OCI-LY7 (cell line): ENCODE measurements at regions of chr6 and their contacts with region 1.

Region 1: DNA sequence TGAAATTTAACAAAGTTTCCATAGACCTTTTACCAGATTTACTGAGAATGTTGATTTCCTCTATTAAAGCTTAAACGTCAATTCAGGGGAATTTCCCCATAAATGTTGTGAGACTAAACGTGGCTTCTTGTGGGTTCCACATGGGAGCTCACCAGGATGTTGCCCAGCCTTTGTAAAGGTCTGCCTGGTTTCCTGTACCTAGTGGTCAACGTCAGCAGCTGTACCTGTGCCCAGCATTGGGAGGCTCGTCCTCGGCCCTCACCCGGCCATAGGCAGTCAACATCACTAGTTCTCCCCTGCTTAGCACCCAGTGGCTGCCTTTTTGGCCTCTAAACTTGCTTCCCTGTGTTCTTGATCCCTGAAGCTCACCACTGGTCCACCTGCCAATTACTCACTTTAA is 22.1 kb upstream of the CD83 start:
- DNase-seq: peak; percentile 75
- H3K4me3 ChIP-seq: peak overlapping the region; percentile 28
- H3K27ac ChIP-seq: peak overlapping the region; percentile 44
- H3K4me1 ChIP-seq: peaks cover 63% of the 10 kb centered on the region
- CTCF ChIP-seq: no peak

Region 2: DNA sequence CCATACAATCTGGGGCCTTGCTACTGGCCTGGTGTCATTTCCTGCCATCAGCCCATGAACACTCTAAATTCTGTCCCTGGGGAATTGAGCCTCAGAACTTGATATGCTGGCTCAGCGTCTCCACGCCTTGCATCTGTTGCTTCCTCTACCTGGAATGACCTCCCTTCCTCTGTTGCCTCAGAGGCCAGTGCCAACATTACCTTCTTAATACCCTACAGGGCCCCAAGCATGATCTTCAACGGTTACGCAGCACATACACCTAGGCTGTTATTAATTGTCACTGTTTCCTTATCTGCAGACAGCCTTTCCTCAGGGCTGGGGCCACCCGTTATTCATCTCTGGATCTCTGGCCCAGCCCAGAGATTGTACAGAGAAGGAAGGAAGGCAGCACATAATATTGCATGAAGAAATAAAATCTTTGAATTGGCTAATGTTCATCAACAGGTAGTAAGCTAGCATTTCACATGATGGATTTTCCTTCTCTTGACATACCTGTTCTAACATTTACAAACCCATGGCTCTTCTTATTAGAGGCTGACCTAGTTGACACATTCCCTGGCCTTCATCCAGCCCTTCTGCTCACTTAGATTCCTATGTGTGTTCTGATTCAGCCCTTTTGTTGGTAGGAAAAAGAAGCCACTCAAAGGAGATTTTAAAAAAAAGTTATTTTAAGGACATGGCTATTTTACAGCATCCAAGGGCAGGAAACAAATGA is 179.1 kb before region 1 on chr6:
- CTCF ChIA-PET with region 1: no interaction called
- POLR2A ChIA-PET with region 1: no interaction called
- intact Hi-C with region 1: no loop called
- DNase-seq: peak; percentile 26
- H3K4me3 ChIP-seq: no peak overlapping the region
- H3K27ac ChIP-seq: no peak overlapping the region
- H3K4me1 ChIP-seq: no peaks in the 10 kb centered on the region
- CTCF ChIP-seq: no peak

Region 3: DNA sequence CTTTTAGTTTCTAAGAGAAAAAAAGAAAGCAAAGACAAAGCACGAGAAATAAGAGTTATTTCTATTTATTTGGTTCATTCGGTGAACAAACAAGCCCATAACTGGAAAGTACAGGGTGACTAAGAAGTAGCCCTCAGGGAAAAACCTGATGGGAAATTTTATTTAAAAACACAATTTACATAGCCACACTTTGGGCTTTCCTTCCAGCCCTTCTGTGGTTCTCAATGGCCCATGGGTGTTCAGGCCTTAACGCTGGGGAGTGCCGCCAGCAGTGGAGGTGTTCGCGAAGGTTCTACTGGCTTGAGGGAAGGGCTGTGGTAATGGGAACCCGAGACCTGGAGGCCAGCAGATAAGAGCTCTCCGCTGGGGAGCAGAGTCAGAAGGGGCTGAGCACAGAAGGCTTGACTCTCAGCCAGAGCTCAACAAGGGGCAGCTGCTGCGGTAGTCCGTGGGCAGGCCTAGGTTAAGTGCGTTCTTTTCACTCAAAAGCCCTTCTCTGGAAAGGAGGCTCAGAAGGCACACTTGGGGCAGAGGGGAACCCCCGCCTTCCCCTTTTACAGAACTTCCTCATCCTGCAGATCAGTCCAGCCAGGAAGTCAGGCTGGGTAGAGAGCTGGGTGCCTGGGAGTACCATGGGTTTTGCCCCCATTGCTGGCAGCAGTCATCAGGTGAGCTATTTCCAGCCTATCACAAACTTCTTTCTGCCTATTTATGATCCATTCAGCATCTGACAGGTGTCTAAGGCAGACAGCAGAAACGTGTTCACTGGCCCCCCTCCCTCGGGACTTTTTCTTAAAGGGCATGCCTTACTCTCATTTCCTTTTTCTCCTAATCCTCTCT is 13.4 kb after region 1 on chr6:
- CTCF ChIA-PET with region 1: interaction called, 3 read pairs
- POLR2A ChIA-PET with region 1: interaction called, 21 read pairs
- intact Hi-C with region 1: no loop called
- DNase-seq: peak; percentile 75
- H3K4me3 ChIP-seq: peak overlapping the region; percentile 39
- H3K27ac ChIP-seq: peak overlapping the region; percentile 43
- H3K4me1 ChIP-seq: peaks cover 31% of the 10 kb centered on the region
- CTCF ChIP-seq: no peak

Region 4: DNA sequence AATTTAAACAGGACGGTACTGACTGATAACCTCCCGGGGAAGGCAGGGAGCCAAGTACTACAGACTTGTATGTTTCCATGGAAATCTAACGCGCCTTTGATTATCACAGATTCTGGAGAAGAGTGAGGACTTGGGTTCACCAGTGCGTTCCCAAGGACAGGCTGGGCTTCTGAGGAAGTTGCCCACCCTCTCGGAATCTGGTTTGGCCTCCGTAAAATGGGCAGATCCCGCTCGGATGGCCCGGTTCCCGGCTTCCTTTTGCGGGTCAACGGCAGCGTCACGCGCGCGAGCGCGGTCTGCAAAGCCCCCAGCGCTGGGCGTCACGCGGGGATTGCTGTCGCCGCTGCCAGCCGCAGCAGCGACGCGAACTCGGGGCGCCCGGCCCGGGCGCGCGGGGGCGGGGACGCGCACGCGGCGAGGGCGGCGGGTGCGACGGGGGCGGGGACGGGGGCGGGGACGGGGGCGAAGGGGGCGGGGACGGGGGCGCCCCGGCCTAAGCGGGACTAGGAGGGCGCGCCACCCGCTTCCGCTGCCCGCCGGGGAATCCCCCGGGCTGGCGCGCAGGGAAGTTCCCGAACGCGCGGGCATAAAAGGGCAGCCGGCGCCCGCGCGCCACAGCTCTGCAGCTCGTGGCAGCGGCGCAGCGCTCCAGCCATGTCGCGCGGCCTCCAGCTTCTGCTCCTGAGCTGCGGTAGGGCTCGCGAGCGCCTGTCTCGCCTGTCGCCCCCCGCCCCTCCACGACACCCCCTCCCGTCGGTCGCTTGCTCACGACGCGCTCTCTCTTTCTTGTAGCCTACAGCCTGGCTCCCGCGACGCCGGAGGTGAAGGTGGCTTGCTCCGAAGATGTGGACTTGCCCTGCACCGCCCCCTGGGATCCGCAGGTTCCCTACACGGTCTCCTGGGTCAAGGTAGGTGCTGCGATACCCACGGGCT is 22.0 kb after region 1 on chr6 and contains the start of gene CD83:
- CTCF ChIA-PET with region 1: no interaction called
- POLR2A ChIA-PET with region 1: interaction called, 12 read pairs
- intact Hi-C with region 1: no loop called
- DNase-seq: peak; percentile 89
- H3K4me3 ChIP-seq: peak within 1 kb of the TSS; percentile 95
- H3K27ac ChIP-seq: peak within 1 kb of the TSS; percentile 20
- H3K4me1 ChIP-seq: peaks cover 48% of the 10 kb centered on the region
- CTCF ChIP-seq: peak; percentile 46; the same call in 1 of the 2 replicates
- total RNA-seq, gene CD83: 26.2 and 29.7 TPM in 2 replicates

Region 5: DNA sequence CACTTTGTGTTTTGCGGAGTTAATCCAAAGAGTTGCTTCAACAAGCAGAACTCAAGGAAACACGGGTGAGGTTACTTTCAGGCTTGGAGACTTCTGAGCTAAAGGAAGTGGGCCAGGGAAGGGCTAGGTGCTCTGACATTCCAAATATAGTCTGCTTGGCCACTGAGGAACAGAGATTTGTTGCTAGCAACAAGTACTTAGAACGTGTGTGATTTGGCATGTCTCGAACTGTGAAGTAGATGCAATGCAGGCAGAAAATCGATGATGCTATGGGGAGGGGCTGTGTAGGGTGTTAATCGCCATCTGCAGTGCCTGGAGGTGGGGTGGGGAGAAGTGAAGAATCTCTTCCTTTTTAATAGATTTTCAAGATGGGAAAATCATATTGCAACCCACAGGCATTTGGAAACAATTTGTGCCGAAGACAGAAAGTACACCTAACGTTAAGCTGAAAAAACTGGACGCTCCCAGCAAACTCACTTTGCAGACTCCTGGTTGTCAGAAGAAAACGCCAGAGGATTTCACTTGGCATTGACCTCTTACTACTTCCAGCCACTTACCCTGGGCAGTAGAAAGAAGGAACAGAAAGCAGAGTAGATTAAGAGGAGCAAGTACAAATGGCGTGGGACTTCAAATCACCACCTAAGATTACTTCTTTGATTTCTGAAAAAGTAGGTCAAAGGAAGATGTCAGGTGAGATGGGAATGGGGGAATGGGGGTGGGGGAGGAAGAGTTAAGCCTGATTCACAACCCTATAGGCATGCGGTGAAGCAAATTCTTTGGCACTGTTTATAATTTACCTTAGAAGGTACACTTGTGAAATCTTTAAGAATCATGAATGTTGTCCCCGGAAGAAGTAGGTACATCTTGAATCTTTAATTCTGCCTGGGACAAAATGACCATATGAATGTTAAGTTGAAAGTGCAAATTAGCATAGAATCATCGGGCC is 336.2 kb after region 1 on chr6:
- CTCF ChIA-PET with region 1: no interaction called
- POLR2A ChIA-PET with region 1: no interaction called
- intact Hi-C with region 1: no loop called
- DNase-seq: no peak
- H3K4me3 ChIP-seq: no peak overlapping the region
- H3K27ac ChIP-seq: no peak overlapping the region
- H3K4me1 ChIP-seq: no peaks in the 10 kb centered on the region
- CTCF ChIP-seq: no peak